Common myeloid progenitor, CD34-positive (primary cell): ENCODE measurements at regions of chr1 and their contacts with region 1.

Region 1: GRCh38 chr1:43763497-43763973 is 56.2 kb downstream of the ST3GAL3 start:
- DNase-seq: peak; percentile 74 to 85 (median 80)
- H3K4me3 ChIP-seq: no peak overlapping the region
- H3K27ac ChIP-seq: no peak overlapping the region
- H3K4me1 ChIP-seq: peaks cover 0 to 9% (median 6%) of the 10 kb centered on the region in 4 experiments
- H3K27me3 ChIP-seq: no peaks in the 10 kb centered on the region

Region 2: DNA sequence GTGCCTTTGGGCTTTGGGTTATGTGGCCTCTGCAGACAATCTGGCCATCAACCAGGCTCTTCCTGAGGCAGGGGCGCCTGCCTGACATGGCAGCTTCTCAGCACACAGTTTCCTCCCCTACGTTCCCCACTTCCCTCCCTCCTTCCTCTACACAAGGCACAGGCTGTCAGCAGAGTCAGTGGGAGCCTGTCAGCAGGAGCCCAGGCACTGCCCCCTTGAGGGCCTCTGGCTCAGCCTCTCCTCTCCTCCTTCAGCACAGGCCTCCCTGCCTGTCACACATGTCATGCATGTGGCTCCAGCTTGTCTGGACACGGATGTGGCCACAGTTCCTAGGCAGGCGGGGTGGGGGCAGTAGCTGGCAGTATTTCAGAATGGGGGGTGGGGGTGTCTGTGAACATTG is 117.9 kb after region 1 on chr1:
- CTCF ChIA-PET with region 1: interaction called, 45 read pairs
- POLR2A ChIA-PET with region 1: no interaction called
- DNase-seq: peak; percentile 54 to 81 (median 75)
- H3K4me3 ChIP-seq: no peak overlapping the region
- H3K27ac ChIP-seq: no peak overlapping the region
- H3K4me1 ChIP-seq: peaks cover 0 to 16% (median 6%) of the 10 kb centered on the region in 4 experiments
- H3K27me3 ChIP-seq: no peaks in the 10 kb centered on the region

Region 3: DNA sequence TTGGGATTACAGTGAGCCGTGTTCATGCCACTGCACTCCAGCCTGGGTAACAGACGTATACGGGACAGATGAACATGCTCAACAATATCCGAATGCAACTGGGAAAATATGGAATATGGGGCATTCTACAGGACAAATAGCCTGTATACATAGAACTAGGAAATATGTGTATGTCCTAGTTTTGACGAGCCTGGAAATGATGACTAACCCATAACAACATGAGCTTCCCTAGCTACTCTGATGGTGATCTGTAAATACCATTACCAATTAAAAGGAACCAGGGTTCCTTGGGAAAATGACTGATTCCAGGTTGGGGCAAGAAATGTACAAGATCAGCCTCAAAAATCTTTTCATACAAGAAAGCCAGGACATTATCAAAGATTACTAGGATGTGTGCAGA is 127.3 kb after region 1 on chr1:
- CTCF ChIA-PET with region 1: interaction called, 16 read pairs
- POLR2A ChIA-PET with region 1: no interaction called
- DNase-seq: no peak
- H3K4me3 ChIP-seq: no peak overlapping the region
- H3K27ac ChIP-seq: no peak overlapping the region
- H3K4me1 ChIP-seq: peaks cover 0 to 2% (median 0%) of the 10 kb centered on the region in 4 experiments
- H3K27me3 ChIP-seq: no peaks in the 10 kb centered on the region

Region 4: GRCh38 chr1:44924835-44925513 is 1161.4 kb after region 1 on chr1:
- CTCF ChIA-PET with region 1: no interaction called
- POLR2A ChIA-PET with region 1: interaction called, 10 read pairs
- DNase-seq: peak; percentile 26 to 51 (median 44)
- H3K4me3 ChIP-seq: no peak overlapping the region
- H3K27ac ChIP-seq: no peak overlapping the region
- H3K4me1 ChIP-seq: no peaks in the 10 kb centered on the region
- H3K27me3 ChIP-seq: no peaks in the 10 kb centered on the region